WTC11 (cell line): ENCODE measurements at regions of chr1 and their contacts with region 1.

Region 1: GRCh38 chr1:65459397-65459768 is 38.9 kb downstream of the LEPR start:
- DNase-seq: no peak
- ATAC-seq: peak; percentile 92
- H3K4me3 Mint-ChIP-seq: no peak overlapping the region
- H3K27ac Mint-ChIP-seq: no peak overlapping the region
- H3K4me1 Mint-ChIP-seq: peaks cover 28% of the 10 kb centered on the region
- H3K27me3 Mint-ChIP-seq: no peaks in the 10 kb centered on the region; the same call in 1 of the 2 replicates
- CTCF ChIP-seq: no peak; the same call in none of the 2 replicates

Region 2: GRCh38 chr1:65083263-65083896 is 376.0 kb before region 1 on chr1:
- CTCF ChIA-PET with region 1: no interaction called
- POLR2A ChIA-PET with region 1: no interaction called
- DNase-seq: no peak
- ATAC-seq: no peak
- H3K4me3 Mint-ChIP-seq: no peak overlapping the region
- H3K27ac Mint-ChIP-seq: no peak overlapping the region
- H3K4me1 Mint-ChIP-seq: no peaks in the 10 kb centered on the region
- H3K27me3 Mint-ChIP-seq: peaks cover 6% of the 10 kb centered on the region
- CTCF ChIP-seq: no peak

Region 3: DNA sequence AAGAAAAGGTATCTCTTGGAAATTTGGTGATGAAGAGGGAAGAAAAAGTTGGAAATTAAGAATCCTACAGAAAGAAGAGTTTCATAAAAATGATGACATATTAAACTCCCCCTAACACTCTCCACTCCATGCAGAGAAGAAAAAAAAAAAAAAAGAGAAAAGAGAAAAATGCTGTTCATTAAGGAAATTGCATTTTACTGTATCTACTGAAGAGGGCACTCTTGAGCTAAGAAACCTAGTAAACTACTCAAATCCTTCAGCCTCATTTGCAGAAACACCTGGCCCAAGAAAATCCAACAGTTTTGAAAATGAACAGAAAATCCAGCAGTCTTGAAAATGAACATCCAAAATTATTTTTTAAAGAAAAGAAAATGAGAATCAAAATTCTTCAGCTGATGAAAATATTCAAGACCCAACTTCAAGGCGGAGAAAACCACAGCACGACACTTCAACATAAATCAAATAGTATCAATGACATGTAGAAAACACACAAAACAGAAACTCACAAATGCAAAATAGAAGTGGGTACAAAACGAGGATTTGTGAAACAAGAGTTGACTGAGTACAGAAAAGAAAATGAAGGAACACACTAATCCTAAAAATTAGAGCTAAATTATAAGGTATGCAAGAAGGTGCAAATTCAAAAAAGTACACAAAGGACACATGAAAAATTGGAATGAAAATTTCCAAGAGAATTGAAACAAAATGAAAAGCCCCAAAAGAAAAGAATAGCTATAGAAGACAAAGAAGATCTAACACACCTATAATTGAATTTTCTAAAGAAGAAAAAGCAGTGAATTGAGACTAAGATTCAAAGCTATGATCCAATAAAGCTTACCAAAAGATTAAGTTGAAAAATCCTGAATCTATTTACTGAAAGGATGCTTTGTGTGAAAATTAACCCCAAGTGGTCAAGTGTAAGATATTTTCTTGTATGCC is 223.2 kb before region 1 on chr1:
- CTCF ChIA-PET with region 1: interaction called, 25 read pairs
- POLR2A ChIA-PET with region 1: interaction called, 3 read pairs
- DNase-seq: no peak
- ATAC-seq: peak; percentile 55
- H3K4me3 Mint-ChIP-seq: no peak overlapping the region
- H3K27ac Mint-ChIP-seq: no peak overlapping the region
- H3K4me1 Mint-ChIP-seq: peaks cover 8% of the 10 kb centered on the region; the same call in 1 of the 2 replicates
- H3K27me3 Mint-ChIP-seq: no peaks in the 10 kb centered on the region
- CTCF ChIP-seq: peak; percentile 49; the same call in 1 of the 2 replicates

Region 4: DNA sequence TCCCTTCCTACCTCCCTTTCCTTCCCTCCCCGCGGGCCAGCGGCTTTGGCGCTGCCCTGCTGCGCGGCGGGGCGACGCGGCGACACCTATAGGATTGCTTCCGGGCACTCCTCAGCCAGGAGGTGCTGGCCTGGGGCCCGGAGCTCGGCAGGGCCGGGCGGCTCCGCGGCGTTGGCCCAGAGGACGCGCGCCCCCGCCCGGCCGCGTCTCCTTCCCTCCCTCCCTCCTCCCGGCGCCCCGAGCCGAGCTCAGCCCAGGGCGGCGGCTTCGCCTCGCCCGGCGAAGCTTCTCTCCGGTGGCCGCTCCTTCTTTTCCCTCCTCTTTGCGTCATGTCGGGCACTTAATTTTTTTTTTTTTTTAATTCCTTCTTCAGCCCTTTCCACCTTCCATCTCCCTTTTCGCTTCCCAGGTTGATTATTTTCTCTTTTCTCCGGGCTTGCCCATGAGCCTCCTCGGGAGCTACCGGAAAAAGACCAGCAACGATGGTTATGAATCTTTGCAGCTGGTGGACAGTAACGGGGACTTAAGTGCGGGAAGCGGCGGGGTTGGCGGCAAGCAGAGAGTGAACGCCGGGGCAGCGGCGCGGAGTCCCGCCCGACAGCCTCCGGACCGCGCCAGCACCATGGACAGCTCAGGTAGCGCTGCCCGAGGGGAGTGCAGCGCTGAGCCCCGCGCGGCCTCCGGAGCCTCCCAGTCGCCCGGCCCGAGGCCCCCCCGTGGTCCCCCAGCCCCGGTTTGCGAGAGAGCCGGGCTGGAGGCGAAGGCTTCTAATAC is 149.9 kb before region 1 on chr1 and contains the start of gene DNAJC6:
- CTCF ChIA-PET with region 1: interaction called, 10 read pairs
- POLR2A ChIA-PET with region 1: no interaction called
- DNase-seq: peak; percentile 93
- ATAC-seq: peak; percentile 90
- H3K4me3 Mint-ChIP-seq: peak within 1 kb of the TSS; percentile 95
- H3K27ac Mint-ChIP-seq: peak within 1 kb of the TSS; percentile 70
- H3K4me1 Mint-ChIP-seq: peaks cover 29% of the 10 kb centered on the region
- H3K27me3 Mint-ChIP-seq: peaks cover 17% of the 10 kb centered on the region
- CTCF ChIP-seq: no peak
- total RNA-seq, gene DNAJC6: 6.0 to 9.1 TPM (median 7.6 TPM) in 3 replicates

Region 5: GRCh38 chr1:65372557-65372956 is 86.8 kb before region 1 on chr1:
- CTCF ChIA-PET with region 1: no interaction called
- POLR2A ChIA-PET with region 1: no interaction called
- DNase-seq: no peak
- ATAC-seq: no peak
- H3K4me3 Mint-ChIP-seq: no peak overlapping the region
- H3K27ac Mint-ChIP-seq: no peak overlapping the region
- H3K4me1 Mint-ChIP-seq: no peaks in the 10 kb centered on the region
- H3K27me3 Mint-ChIP-seq: no peaks in the 10 kb centered on the region
- CTCF ChIP-seq: no peak

Region 6: GRCh38 chr1:65419681-65420589 is 39.4 kb before region 1 on chr1:
- CTCF ChIA-PET with region 1: interaction called, 13 read pairs
- POLR2A ChIA-PET with region 1: interaction called, 3 read pairs
- DNase-seq: peak; percentile 99
- ATAC-seq: peak; percentile 93
- H3K4me3 Mint-ChIP-seq: no peak overlapping the region; the same call in none of the 2 replicates
- H3K27ac Mint-ChIP-seq: peak overlapping the region; percentile 97
- H3K4me1 Mint-ChIP-seq: peaks cover 34% of the 10 kb centered on the region
- H3K27me3 Mint-ChIP-seq: no peaks in the 10 kb centered on the region
- CTCF ChIP-seq: no peak

Region 7: DNA sequence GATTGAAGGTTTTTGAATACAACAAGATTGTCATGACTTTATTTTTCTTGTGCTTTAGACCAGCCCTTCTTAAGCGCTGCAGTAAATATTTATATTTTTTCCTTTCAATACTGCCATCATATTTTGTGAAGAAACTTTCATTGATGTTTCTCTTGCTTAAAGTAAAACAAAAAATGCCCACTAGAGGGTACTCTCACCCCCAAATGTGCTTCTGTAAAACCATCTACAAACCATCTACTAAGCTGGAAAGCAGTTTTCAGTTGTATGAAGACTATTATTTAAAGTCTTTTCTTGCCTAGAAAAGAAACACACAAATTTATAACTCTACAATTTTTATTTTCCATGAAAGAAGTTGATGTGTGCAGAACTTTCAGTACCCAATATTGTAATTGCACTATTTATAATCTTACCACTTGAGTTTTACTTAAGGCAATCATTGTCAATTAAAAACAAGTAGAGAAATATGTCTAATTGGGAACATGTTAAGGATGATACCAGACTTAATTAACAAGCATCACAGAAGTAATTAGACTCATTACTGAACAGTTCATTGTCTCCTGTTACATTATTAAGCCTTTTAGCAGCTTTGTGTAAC is 28.2 kb before region 1 on chr1:
- CTCF ChIA-PET with region 1: interaction called, 76 read pairs
- POLR2A ChIA-PET with region 1: interaction called, 3 read pairs
- DNase-seq: no peak
- ATAC-seq: no peak
- H3K4me3 Mint-ChIP-seq: no peak overlapping the region
- H3K27ac Mint-ChIP-seq: no peak overlapping the region
- H3K4me1 Mint-ChIP-seq: peaks cover 41% of the 10 kb centered on the region
- H3K27me3 Mint-ChIP-seq: no peaks in the 10 kb centered on the region
- CTCF ChIP-seq: peak; percentile 43

Region 8: DNA sequence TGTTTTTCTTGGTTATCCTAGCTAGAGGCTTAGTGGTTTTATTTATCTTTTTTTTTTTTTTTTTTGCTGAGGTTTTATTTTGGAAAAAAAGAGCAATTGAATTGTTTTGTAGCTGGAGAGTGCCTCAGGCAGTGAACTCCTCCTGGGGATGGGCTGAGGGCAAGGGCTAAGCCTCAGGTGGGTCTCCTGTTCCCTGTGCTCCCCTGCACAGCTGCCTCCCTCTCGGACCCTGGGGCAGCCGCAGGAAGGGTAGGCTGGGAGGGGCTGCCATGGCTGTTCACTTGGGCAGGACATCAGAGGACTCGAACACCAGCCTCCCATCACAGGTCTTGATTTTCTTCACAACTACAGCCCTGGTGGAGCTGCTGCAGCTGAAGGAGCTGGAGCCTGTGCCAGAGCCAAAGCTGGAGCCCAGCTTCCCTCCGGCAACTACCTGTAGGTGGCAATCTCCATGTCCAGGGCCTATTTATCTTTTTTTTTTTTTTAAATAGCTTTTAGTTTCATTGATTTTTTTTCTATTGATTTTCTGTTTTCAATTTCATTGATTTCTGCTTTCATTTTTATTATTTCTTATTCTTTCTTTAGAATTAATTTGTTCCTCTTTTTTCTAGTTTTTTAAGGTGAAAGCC is 10.1 kb before region 1 on chr1:
- CTCF ChIA-PET with region 1: interaction called, 44 read pairs
- POLR2A ChIA-PET with region 1: no interaction called
- DNase-seq: peak; percentile 34
- ATAC-seq: peak; percentile 95
- H3K4me3 Mint-ChIP-seq: no peak overlapping the region
- H3K27ac Mint-ChIP-seq: no peak overlapping the region
- H3K4me1 Mint-ChIP-seq: peaks cover 12% of the 10 kb centered on the region
- H3K27me3 Mint-ChIP-seq: peaks cover 5% of the 10 kb centered on the region; the same call in 1 of the 2 replicates
- CTCF ChIP-seq: no peak

Region 9: GRCh38 chr1:65687428-65688214 is 228.2 kb after region 1 on chr1:
- CTCF ChIA-PET with region 1: interaction called, 16 read pairs
- POLR2A ChIA-PET with region 1: no interaction called
- DNase-seq: peak; percentile 88
- ATAC-seq: peak; percentile 92
- H3K4me3 Mint-ChIP-seq: no peak overlapping the region
- H3K27ac Mint-ChIP-seq: no peak overlapping the region
- H3K4me1 Mint-ChIP-seq: peaks cover 8% of the 10 kb centered on the region
- H3K27me3 Mint-ChIP-seq: peaks cover 5% of the 10 kb centered on the region; the same call in 1 of the 2 replicates
- CTCF ChIP-seq: peak; percentile 96